ENCODE measurements at regions of chr1 and their contacts with region 1.

Region 1: DNA sequence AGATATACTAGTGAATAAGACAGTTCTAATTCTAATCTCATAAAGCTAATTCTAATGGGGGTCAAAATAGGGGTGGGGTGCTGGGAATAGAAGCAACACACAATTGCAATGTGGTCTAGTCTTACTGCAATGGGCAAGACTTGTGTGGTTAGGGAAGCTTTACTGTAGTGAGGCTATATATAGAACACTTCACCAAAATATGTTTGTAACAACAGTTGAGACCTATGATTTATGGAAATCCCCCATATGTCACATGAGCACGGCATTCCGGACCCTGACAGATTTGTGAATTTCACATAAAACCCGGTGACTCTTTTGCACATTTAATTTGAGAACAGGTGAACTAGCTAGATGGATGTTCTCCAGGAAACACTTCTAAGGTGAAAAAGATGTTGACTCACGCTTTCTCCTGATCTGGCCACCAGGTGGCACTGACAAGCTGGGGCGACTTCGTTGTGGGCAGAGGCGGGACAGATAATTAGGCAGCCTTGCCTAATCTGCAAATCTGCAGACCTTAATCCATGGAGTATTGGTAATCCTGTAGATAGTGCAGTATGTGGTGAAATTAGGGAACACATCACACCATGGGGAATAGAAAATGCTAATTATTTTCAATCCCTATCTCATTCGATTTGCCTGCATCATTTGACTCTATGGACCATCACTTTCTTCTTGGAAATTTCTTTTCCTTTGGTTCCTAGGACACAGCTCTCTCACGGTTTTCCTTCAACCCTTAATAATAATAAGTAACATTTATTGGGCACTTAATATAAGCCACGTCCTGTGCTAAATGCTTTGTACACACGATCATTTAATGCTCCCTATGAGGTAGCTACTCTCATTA is 37.7 kb downstream of the KIAA0040 start:
- DNase-seq: peak; percentile 60 to 70 (median 66)
- H3K4me3 ChIP-seq: no peak overlapping the region
- H3K4me3 Mint-ChIP-seq: no peak overlapping the region
- H3K27ac ChIP-seq: no peak overlapping the region
- H3K27ac Mint-ChIP-seq: no peak overlapping the region
- H3K4me1 ChIP-seq: peaks cover 13% of the 10 kb centered on the region
- H3K4me1 Mint-ChIP-seq: peaks cover 12 to 23% (median 17%) of the 10 kb centered on the region in 4 donors
- H3K27me3 ChIP-seq: no peaks in the 10 kb centered on the region
- H3K27me3 Mint-ChIP-seq: peaks cover 25 to 26% of the 10 kb centered on the region in 2 donors

Region 2: GRCh38 chr1:175174309-175175165 is 19.7 kb after region 1 on chr1:
- CTCF ChIA-PET with region 1: interaction called, 27 read pairs
- POLR2A ChIA-PET with region 1: interaction called, 3 read pairs
- intact Hi-C with region 1: no loop called
- DNase-seq: peak in 3 of 5 donors; percentile 18 to 35 (median 22)
- H3K4me3 ChIP-seq: no peak overlapping the region
- H3K4me3 Mint-ChIP-seq: peak overlapping the region in 5 of 8 donors; percentile 8 to 65 (median 45)
- H3K27ac ChIP-seq: no peak overlapping the region
- H3K27ac Mint-ChIP-seq: peak overlapping the region; percentile 42 to 89 (median 84)
- H3K4me1 ChIP-seq: peaks cover 50% of the 10 kb centered on the region
- H3K4me1 Mint-ChIP-seq: peaks cover 60 to 87% (median 74%) of the 10 kb centered on the region in 4 donors
- H3K27me3 ChIP-seq: no peaks in the 10 kb centered on the region
- H3K27me3 Mint-ChIP-seq: no peaks in the 10 kb centered on the region

Region 3: DNA sequence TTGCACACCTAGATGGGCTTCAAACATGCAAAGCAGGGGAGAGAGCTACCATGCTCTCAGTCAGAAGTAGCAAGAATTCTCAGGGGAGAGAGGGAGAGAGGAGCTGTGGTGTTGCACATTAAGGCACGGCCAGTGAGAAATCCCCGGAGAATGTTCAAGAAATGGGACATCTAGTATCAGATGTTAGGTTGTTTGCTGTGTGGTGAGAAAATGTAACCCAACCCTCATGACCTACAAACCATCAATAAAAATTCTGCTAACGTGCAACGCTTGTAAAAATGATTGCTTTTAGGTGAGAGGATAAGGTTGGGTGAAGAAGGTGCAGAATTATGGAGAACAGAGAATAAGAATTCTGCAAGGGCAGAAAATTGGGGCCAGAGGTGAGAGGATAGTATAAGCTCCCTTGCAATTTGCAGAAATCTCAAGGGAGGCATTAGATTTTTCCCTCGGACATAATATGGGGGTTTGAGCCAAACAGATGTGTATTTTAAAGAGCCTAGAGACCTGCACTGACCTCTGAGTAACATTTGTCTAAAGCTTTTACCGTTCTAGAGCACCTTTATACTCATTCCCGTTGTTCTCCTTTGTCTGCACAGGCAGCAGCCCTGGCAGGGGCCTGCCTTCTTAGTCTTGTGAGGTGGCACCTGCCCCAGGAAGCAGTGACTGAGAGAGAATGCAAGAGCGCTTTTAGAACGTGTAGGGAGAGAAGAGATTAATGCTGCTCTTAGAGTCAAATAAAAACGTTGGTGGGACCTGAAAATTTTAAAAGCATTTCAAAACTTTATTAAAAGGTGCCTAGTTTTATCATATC is 63.1 kb after region 1 on chr1:
- CTCF ChIA-PET with region 1: interaction called, 25 read pairs
- POLR2A ChIA-PET with region 1: no interaction called
- intact Hi-C with region 1: no loop called
- DNase-seq: no peak
- H3K4me3 ChIP-seq: no peak overlapping the region
- H3K4me3 Mint-ChIP-seq: no peak overlapping the region
- H3K27ac ChIP-seq: no peak overlapping the region
- H3K27ac Mint-ChIP-seq: no peak overlapping the region
- H3K4me1 ChIP-seq: peaks cover 10% of the 10 kb centered on the region
- H3K4me1 Mint-ChIP-seq: peaks cover 10 to 34% (median 19%) of the 10 kb centered on the region in 4 donors
- H3K27me3 ChIP-seq: no peaks in the 10 kb centered on the region
- H3K27me3 Mint-ChIP-seq: no peaks in the 10 kb centered on the region

Region 4: DNA sequence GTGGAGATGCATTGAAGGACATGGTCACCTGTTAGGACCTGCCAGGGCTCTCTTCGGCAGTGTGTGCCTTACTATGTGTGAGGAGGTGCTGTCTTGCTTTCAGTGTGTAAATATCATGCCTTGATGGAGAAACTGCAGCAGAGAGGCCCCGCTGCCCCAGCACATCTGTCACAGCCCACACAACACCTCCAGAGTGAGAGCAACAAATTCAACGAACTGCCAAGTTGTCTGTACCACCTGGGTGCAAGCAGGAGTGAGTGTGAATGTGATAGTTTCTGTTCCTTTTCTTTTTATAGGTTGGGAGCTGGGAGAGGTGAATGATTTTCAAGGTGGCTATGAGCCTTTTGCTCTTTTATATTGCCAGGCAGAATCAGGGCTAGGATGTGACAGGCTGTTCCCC is 152.3 kb after region 1 on chr1:
- CTCF ChIA-PET with region 1: interaction called, 490 read pairs
- POLR2A ChIA-PET with region 1: no interaction called
- intact Hi-C with region 1: no loop called
- DNase-seq: no peak
- H3K4me3 ChIP-seq: no peak overlapping the region
- H3K4me3 Mint-ChIP-seq: no peak overlapping the region
- H3K27ac ChIP-seq: no peak overlapping the region
- H3K27ac Mint-ChIP-seq: no peak overlapping the region
- H3K4me1 ChIP-seq: no peaks in the 10 kb centered on the region
- H3K4me1 Mint-ChIP-seq: no peaks in the 10 kb centered on the region
- H3K27me3 ChIP-seq: no peaks in the 10 kb centered on the region
- H3K27me3 Mint-ChIP-seq: peaks cover 1 to 8% of the 10 kb centered on the region in 2 donors

Region 5: DNA sequence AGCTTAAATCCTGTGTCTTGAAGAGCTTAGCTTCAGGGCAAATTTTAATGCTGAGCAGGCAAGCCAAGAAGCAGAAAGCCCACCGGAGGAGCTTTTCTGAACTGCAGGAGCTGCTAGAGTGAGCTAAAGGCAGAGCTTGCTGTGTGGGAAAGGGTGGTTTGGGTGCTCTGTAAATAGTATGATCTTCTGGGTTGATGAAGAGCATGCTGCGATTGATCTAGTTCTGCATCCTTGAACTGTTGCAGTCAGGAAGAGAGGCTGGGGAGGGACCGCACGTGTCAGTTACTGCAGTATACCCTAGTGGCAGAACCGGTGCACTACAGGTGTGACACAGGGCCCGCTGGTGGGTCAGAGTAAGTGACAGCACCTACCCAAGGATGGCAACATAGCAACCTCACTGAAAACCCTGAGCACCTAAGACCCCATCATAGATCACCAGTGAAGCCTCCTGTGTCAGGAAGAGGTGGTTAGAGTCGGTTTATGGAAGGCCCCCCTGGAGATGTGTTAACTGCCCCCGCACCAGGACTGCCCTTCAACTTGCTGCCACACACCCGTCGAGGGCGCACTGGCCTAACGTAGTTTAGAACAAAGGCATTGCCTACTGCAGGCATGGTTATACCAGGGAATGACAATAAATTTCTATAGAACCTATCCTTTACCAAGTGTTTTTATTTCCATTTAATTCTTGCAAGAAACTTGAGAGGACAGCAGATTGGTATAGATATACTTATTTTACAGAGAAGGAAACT is 183.7 kb after region 1 on chr1:
- CTCF ChIA-PET with region 1: interaction called, 27 read pairs
- POLR2A ChIA-PET with region 1: no interaction called
- intact Hi-C with region 1: loop called (anchors 1 kb)
- DNase-seq: peak; percentile 27 to 61 (median 45)
- H3K4me3 ChIP-seq: no peak overlapping the region
- H3K4me3 Mint-ChIP-seq: no peak overlapping the region
- H3K27ac ChIP-seq: no peak overlapping the region
- H3K27ac Mint-ChIP-seq: no peak overlapping the region
- H3K4me1 ChIP-seq: no peaks in the 10 kb centered on the region
- H3K4me1 Mint-ChIP-seq: peaks cover 0 to 6% (median 4%) of the 10 kb centered on the region in 4 donors
- H3K27me3 ChIP-seq: no peaks in the 10 kb centered on the region
- H3K27me3 Mint-ChIP-seq: peaks cover 18 to 26% of the 10 kb centered on the region in 2 donors